Calu3 (cell line): ENCODE measurements at regions of chr19 and their contacts with region 1.

Region 1: GRCh38 chr19:47190167-47190727 is 40.8 kb downstream of the BBC3 start:
- DNase-seq: peak; percentile 87
- H3K4me3 Mint-ChIP-seq: peak overlapping the region; percentile 21
- H3K27ac Mint-ChIP-seq: peak overlapping the region; percentile 50
- H3K4me1 Mint-ChIP-seq: peaks cover 58% of the 10 kb centered on the region
- H3K27me3 Mint-ChIP-seq: no peaks in the 10 kb centered on the region
- CTCF ChIP-seq: no peak

Region 2: DNA sequence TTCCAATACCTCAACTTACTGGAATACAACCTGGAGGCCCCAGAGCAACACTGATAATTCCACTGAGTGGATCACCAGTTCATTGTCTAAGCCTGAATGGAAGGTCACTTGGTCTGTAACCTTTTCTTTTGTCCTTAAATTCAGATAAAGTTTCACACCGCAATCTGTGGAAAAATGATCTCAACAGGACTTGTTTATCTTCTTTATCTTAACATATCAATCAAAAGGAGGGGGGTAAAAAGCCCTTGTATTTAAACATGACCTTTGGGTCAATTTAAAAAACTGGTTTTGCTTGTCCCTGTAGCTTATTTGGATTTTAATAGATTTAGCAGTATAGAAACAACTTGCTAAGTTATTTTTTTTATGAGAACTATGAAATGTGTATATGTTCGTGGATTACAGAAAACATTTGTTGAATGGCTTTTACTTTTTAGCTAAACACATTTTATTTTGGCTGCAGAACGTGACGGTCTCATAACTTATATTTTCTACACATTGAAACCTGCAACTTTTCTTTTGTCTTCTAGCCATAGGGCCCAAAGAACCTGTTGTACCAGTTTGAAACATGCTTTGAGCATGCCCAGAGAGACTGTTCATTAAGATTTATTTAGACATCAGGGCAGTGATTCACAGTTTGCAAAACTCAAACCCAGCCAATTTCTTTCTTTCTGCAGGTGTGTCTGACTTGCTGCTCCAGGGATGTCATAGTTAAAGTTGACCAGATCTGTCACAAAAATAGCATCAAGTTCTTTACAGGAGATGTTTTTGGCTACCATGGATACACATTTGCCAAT is 37.8 kb before region 1 on chr19:
- CTCF ChIA-PET with region 1: interaction called, 6 read pairs
- intact Hi-C with region 1: loop called (anchors 5 kb)
- DNase-seq: peak; percentile 49
- H3K4me3 Mint-ChIP-seq: peak overlapping the region; percentile 39
- H3K27ac Mint-ChIP-seq: peak overlapping the region; percentile 23
- H3K4me1 Mint-ChIP-seq: peaks cover 37% of the 10 kb centered on the region
- H3K27me3 Mint-ChIP-seq: no peaks in the 10 kb centered on the region
- CTCF ChIP-seq: no peak

Region 3: DNA sequence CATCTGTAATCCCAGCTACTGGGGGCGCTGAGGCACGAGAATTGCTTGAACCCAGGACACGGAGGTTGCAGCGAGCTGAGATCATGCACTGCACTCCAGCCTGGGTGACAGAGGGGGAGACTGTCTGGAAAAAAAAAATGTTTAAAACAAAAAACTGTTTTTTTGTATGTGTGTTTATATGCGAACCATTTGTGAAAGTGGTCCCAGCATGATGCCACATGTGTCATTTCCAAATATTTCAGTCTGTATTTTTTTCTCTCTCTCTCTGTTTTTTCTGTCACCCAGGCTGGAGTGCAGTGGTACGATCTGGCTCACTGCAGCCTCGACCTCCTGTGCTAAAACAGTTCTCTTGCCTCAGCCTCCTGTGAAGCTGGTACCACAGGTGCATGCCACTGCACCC is 22.2 kb before region 1 on chr19:
- CTCF ChIA-PET with region 1: no interaction called
- intact Hi-C with region 1: no loop called
- DNase-seq: no peak
- H3K4me3 Mint-ChIP-seq: no peak overlapping the region
- H3K27ac Mint-ChIP-seq: no peak overlapping the region
- H3K4me1 Mint-ChIP-seq: no peaks in the 10 kb centered on the region
- H3K27me3 Mint-ChIP-seq: no peaks in the 10 kb centered on the region
- CTCF ChIP-seq: no peak

Region 4: GRCh38 chr19:47200530-47200929 is 10.3 kb after region 1 on chr19:
- CTCF ChIA-PET with region 1: interaction called, 10 read pairs
- intact Hi-C with region 1: no loop called
- DNase-seq: no peak
- H3K4me3 Mint-ChIP-seq: no peak overlapping the region
- H3K27ac Mint-ChIP-seq: no peak overlapping the region
- H3K4me1 Mint-ChIP-seq: peaks cover 5% of the 10 kb centered on the region
- H3K27me3 Mint-ChIP-seq: no peaks in the 10 kb centered on the region
- CTCF ChIP-seq: no peak

Region 5: DNA sequence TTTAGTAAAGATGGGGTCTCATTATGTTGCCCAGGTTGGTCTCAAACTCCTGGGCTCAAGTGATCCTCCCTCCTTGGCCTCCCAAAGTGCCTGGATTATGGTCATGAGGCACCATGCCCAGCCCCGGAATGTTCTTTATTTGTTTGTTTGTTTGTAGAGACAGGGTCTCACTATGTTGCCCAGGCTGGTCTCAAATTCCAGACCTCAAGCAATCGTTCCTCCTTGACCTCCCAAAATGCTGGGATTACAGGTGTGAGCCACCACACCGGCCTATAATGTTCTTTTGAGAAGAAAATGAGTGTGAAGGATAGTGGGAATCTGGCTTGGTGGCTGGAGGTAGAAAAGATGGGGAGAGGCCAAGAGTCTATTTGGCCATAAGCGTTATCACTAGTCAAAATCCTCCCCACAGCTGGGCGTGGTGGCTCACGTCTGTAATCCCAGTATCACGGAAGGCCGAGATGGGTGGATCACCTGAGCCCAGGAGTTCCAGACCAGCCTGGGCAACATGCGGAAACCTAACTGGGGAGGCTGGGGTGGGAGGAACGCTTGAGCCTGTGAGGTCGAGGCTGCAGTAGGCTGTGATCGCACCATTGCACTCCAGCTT is 45.9 kb after region 1 on chr19:
- CTCF ChIA-PET with region 1: no interaction called
- intact Hi-C with region 1: no loop called
- DNase-seq: no peak
- H3K4me3 Mint-ChIP-seq: no peak overlapping the region
- H3K27ac Mint-ChIP-seq: no peak overlapping the region
- H3K4me1 Mint-ChIP-seq: peaks cover 27% of the 10 kb centered on the region
- H3K27me3 Mint-ChIP-seq: peaks cover 25% of the 10 kb centered on the region
- CTCF ChIP-seq: no peak